ENCODE measurements at regions of chr20 and their contacts with region 1.

Region 1: DNA sequence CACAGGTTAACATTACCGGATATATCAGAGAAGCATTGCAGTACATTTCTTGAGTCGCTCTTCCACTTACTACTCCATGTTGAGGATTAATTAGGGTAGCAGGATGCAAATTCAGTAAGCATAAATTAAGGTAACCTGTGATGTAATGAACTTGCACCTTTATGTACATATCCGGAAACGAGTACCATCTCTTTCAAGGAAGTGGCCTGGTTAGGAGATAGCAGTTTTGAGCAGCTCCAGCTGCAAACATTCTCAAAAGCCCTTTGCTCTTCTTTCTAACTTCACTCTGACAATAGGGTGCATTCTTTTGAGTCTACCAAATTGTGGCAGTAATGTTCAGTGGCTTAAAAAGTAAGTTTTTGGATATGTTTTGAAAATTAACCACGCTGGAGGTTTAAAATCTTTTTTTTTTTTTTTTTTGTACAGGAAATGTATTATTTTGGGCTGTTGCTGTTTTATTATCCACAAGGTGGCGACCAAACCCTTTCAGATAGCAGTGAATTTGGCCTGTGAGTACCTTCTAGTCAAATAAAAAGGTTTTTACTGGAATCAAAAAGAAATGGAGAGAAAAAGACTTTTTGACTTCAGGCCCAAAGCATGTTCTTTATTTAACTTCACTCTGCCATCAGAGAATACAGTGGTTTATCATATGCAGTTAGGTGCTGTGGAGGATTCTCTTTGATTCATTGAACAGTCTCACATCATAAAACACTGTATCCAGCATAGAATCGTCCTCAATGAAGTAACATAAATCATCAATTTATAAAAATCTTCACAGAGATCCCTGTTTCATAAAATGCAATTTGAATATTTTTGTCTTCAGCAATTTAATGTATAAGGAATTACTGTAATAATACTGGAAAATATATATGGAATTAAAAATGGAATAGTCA is 8.9 kb downstream of the FAM217B start:
- DNase-seq: peak; percentile 71
- H3K4me3 Mint-ChIP-seq: no peak overlapping the region
- H3K27ac Mint-ChIP-seq: no peak overlapping the region
- H3K4me1 Mint-ChIP-seq: no peaks in the 10 kb centered on the region
- H3K27me3 Mint-ChIP-seq: no peaks in the 10 kb centered on the region
- CTCF ChIP-seq: peak; percentile 23

Region 2: GRCh38 chr20:59880198-59880597 is 68.9 kb before region 1 on chr20:
- CTCF ChIA-PET with region 1: no interaction called
- POLR2A ChIA-PET with region 1: no interaction called
- intact Hi-C with region 1: no loop called
- DNase-seq: no peak
- H3K4me3 Mint-ChIP-seq: no peak overlapping the region
- H3K27ac Mint-ChIP-seq: no peak overlapping the region
- H3K4me1 Mint-ChIP-seq: peaks cover 9% of the 10 kb centered on the region
- H3K27me3 Mint-ChIP-seq: no peaks in the 10 kb centered on the region
- CTCF ChIP-seq: no peak

Region 3: GRCh38 chr20:59972037-59972801 is 23.1 kb after region 1 on chr20:
- CTCF ChIA-PET with region 1: interaction called, 12 read pairs
- POLR2A ChIA-PET with region 1: interaction called, 10 read pairs
- intact Hi-C with region 1: no loop called
- DNase-seq: peak; percentile 82
- H3K4me3 Mint-ChIP-seq: peak overlapping the region; percentile 37
- H3K27ac Mint-ChIP-seq: peak overlapping the region; percentile 80
- H3K4me1 Mint-ChIP-seq: peaks cover 20% of the 10 kb centered on the region
- H3K27me3 Mint-ChIP-seq: no peaks in the 10 kb centered on the region
- CTCF ChIP-seq: no peak

Region 4: GRCh38 chr20:60040471-60041162 is 91.5 kb after region 1 on chr20:
- CTCF ChIA-PET with region 1: interaction called, 360 read pairs
- POLR2A ChIA-PET with region 1: no interaction called
- intact Hi-C with region 1: no loop called
- DNase-seq: no peak
- H3K4me3 Mint-ChIP-seq: no peak overlapping the region
- H3K27ac Mint-ChIP-seq: no peak overlapping the region
- H3K4me1 Mint-ChIP-seq: peaks cover 18% of the 10 kb centered on the region
- H3K27me3 Mint-ChIP-seq: no peaks in the 10 kb centered on the region
- CTCF ChIP-seq: no peak

Region 5: GRCh38 chr20:60057123-60057801 is 108.2 kb after region 1 on chr20:
- CTCF ChIA-PET with region 1: interaction called, 360 read pairs
- POLR2A ChIA-PET with region 1: no interaction called
- intact Hi-C with region 1: no loop called
- DNase-seq: peak; percentile 73
- H3K4me3 Mint-ChIP-seq: no peak overlapping the region
- H3K27ac Mint-ChIP-seq: no peak overlapping the region
- H3K4me1 Mint-ChIP-seq: peaks cover 24% of the 10 kb centered on the region
- H3K27me3 Mint-ChIP-seq: no peaks in the 10 kb centered on the region
- CTCF ChIP-seq: peak; percentile 83

Region 6: DNA sequence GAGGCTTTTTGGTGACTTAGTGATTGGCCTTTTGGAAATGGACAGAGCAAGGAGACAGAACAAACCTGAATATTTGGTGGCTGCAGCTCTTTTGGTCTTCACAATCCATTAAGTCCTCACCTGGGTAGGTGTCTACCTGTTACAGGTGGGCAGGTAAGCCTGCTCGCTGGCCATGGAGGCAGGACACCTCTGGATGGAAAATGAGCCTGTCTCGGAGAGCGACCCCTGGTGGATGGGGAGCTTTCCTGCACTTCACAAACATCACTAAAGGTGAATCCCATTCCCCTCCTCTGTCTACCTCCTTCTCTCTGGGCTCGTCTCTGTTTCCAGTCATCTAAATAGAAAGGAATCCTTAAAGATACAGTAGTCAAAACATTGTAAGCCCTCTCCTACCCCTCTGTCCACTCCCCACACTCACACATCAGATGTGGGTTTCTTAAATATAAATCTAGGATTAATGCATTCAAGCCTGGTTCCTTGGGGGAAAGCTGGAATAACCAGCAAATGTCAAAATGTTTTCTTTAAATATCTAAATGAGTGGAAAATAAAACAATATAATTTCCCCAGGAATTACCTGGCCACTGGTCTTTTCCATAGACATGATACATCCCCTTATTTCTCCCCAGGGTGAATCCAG is 314.0 kb after region 1 on chr20:
- CTCF ChIA-PET with region 1: interaction called, 4 read pairs
- POLR2A ChIA-PET with region 1: no interaction called
- intact Hi-C with region 1: loop called (anchors 5 kb)
- DNase-seq: peak; percentile 72
- H3K4me3 Mint-ChIP-seq: no peak overlapping the region
- H3K27ac Mint-ChIP-seq: no peak overlapping the region
- H3K4me1 Mint-ChIP-seq: no peaks in the 10 kb centered on the region
- H3K27me3 Mint-ChIP-seq: peaks cover 39% of the 10 kb centered on the region
- CTCF ChIP-seq: peak; percentile 84

Measured in MCF 10A (cell line).